Activated T-helper 2 cell treated with anti-CD3 and anti-CD28 coated beads, Interferon-gamma antibody, Interleukin-2, Interleukin-4, amounts not matched to agents 10 μg/mL and 5 μg/mL and 100 μg/mL, durations not matched to agents 14 hours and 24 hours and 36 hours (primary cell): ENCODE measurements at regions of chr1 and their contacts with region 1.

Region 1: GRCh38 chr1:64171797-64172281 is 31.6 kb upstream of the UBE2U start:
- DNase-seq: no peak
- H3K4me3 Mint-ChIP-seq: no peak overlapping the region
- H3K27ac Mint-ChIP-seq: peak overlapping the region; percentile 36
- H3K4me1 Mint-ChIP-seq: peaks cover 22% of the 10 kb centered on the region
- H3K27me3 Mint-ChIP-seq: peaks cover 53% of the 10 kb centered on the region

Region 2: DNA sequence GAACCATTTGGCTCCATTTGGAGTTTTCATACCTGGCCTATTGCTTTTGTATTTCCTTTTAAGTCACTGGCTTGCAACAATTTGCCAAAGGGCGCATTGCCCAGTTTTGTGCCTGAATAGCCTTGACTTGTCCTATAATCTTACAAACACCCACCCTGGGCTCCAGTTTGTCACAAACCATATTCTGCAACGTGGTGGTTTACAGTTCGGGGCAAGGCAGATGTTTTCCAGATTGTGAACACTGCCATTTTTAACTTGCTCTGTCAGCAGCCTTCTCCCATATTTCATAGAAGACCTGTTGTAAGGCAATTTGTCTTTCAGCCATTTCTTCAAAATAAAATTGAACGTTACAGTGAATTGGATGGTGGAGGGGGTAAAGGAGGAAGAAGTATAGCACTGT is 21.6 kb before region 1 on chr1:
- intact Hi-C with region 1: loop called (anchors 2 kb)
- DNase-seq: no peak
- H3K4me3 Mint-ChIP-seq: no peak overlapping the region
- H3K27ac Mint-ChIP-seq: no peak overlapping the region
- H3K4me1 Mint-ChIP-seq: peaks cover 12% of the 10 kb centered on the region
- H3K27me3 Mint-ChIP-seq: no peaks in the 10 kb centered on the region

Region 3: GRCh38 chr1:64223329-64224151 is 51.7 kb after region 1 on chr1:
- intact Hi-C with region 1: loop called (anchors 1 kb)
- DNase-seq: no peak
- H3K4me3 Mint-ChIP-seq: no peak overlapping the region
- H3K27ac Mint-ChIP-seq: peak overlapping the region; percentile 8
- H3K4me1 Mint-ChIP-seq: peaks cover 13% of the 10 kb centered on the region
- H3K27me3 Mint-ChIP-seq: peaks cover 45% of the 10 kb centered on the region